Lower leg skin (tissue), 4 donors: ENCODE measurements at regions of chr15 and their contacts with region 1.

Region 1: DNA sequence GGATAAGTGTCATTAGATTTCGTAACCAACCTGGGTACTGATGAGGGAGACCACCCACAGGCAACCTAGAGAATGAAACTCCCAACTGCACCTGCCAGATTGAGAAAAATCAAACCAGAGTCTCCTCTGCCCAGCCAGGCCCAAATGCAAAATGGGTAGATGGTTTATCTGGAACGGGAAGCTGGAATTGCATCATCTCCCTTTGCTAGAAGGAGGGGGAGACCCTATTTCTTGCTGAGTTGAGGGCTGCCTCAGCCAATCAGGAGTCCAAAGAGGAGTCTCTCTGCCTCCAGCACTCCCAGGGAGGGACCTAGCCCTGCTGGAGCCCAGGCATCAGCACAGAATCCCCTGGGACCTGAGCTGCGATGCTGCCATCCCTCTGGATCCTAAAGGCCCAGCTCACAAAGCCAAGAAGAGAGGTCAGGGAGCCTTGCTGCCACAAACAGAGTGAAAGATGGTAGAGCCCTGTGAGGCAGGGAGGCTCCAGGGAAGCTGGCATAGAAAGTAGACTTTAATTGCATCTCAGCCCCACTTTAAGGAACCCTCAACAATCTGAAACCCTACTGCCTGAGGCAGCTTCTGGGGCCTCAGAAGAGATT is 8.0 kb downstream of the RMDN3 start:
- DNase-seq: no peak
- H3K4me3 ChIP-seq: no peak overlapping the region
- CTCF ChIP-seq: no peak
- POLR2A ChIP-seq: no peak

Region 2: GRCh38 chr15:40782580-40783227 is 35.7 kb after region 1 on chr15:
- intact Hi-C with region 1: loop called (anchors 5 kb)
- DNase-seq: peak; percentile 47 to 91
- H3K4me3 ChIP-seq: no peak overlapping the region
- CTCF ChIP-seq: peak in 1 of 3 donors; percentile 27
- POLR2A ChIP-seq: no peak

Region 3: DNA sequence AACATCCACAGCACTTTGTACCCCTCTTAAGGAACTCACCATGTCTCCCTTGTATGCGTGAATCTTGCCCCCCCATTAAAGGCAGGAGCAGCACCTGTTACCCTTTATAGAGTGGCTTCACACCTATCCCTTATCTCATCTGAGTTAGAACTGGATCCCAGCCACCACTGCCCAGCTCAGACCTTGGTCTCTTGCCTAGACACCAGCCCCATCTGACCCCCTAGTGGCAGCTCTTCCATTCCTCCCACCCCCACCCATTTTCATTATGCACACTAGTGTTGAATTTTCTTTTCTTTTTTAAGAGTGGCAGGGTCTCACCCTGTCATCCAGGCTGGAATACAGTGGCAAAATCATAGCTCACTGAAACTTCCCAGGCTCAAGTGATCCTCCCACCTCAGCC is 56.7 kb after region 1 on chr15:
- intact Hi-C with region 1: no loop called
- DNase-seq: no peak
- H3K4me3 ChIP-seq: no peak overlapping the region
- CTCF ChIP-seq: no peak
- POLR2A ChIP-seq: no peak

Region 4: GRCh38 chr15:40906091-40906990 is 159.3 kb after region 1 on chr15:
- intact Hi-C with region 1: no loop called
- DNase-seq: peak; percentile 79 to 96
- H3K4me3 ChIP-seq: peak overlapping the region; percentile 1
- CTCF ChIP-seq: peak in 1 of 3 donors; percentile 18
- POLR2A ChIP-seq: no peak

Region 5: DNA sequence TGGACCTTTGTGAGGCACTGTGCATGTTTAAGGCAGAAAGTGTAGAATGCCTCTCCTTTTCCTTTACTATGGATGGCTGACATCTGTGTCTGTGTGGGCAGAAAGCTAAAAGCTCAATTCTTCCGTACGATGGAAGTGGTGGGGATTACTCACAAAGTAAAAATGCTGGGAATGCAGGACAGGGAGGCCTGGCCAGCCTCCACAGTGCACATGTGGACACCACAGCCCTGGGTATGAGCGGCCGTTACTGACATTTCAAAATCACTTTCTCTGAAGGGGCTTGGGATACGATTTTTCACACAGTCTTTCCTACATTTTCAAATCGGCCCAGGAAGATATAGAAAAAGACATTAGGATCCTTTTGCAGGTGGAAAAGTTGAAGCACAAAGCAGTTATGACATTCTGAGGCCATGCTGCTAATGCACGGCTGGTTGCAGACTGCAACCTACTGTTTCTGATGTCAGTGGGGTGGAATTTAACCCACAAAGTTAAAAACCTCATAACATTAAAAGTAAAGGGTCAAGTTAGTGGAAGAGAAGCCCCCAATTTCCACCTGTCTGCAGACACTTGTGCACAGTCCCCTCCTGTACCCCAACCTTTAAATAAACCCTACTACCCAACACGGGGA is 1197.4 kb after region 1 on chr15:
- intact Hi-C with region 1: no loop called
- DNase-seq: peak in 1 of 2 donors; percentile 90
- H3K4me3 ChIP-seq: no peak overlapping the region
- CTCF ChIP-seq: no peak
- POLR2A ChIP-seq: no peak